PC-9 (cell line): ENCODE measurements at regions of chr14 and their contacts with region 1.

Region 1: GRCh38 chr14:21241218-21241819 is 27.9 kb downstream of the HNRNPC start:
- DNase-seq: no peak
- H3K4me3 ChIP-seq: no peak overlapping the region
- H3K27ac ChIP-seq: no peak overlapping the region
- H3K4me1 ChIP-seq: no peaks in the 10 kb centered on the region
- H3K27me3 ChIP-seq: no peaks in the 10 kb centered on the region
- CTCF ChIP-seq: peak; percentile 63

Region 2: GRCh38 chr14:20857630-20858261 is 383.6 kb before region 1 on chr14:
- CTCF ChIA-PET with region 1: no interaction called
- POLR2A ChIA-PET with region 1: no interaction called
- intact Hi-C with region 1: no loop called
- DNase-seq: peak in 1 of 2 experiments; percentile 48
- H3K4me3 ChIP-seq: no peak overlapping the region
- H3K27ac ChIP-seq: no peak overlapping the region
- H3K4me1 ChIP-seq: no peaks in the 10 kb centered on the region
- H3K27me3 ChIP-seq: peaks cover 6% of the 10 kb centered on the region; the same call in 1 of the 2 replicates
- CTCF ChIP-seq: peak; percentile 88

Region 3: DNA sequence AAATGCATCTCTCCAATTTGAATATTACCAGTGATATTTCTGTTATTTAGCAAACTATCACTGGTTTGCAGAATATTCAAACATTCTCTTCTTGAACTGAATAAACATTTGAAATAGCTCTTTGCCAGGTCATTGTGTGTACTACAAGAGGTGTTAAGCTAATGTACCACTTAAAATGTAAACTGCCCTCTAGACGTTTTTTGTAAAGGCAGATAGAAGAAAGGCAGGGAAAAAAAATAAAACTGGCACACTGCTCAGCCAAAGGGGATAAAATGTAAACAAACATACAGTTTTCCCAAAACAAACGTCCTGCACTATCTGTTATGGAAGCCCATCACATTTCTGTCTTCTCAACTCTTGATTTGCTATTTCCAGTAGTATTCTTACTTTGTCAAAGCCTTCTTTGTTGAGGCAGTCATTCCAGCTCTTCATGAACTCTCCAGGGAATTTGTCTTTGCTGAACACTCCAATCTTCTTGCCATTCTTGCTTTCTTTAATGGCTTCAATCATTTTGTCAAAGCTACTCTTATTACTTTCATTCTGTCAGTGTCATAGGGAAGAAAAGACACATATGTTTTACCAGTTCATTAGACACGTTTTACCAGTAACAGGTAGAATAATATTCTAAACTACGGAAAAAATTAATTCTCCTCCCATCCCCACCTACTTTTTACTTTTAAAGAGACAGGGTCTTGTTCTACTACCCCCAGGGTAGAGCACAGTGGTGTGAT is 128.8 kb after region 1 on chr14:
- CTCF ChIA-PET with region 1: no interaction called
- POLR2A ChIA-PET with region 1: no interaction called
- intact Hi-C with region 1: loop called (anchors 10 kb)
- DNase-seq: no peak
- H3K4me3 ChIP-seq: no peak overlapping the region
- H3K27ac ChIP-seq: no peak overlapping the region
- H3K4me1 ChIP-seq: no peaks in the 10 kb centered on the region
- H3K27me3 ChIP-seq: no peaks in the 10 kb centered on the region
- CTCF ChIP-seq: no peak

Region 4: DNA sequence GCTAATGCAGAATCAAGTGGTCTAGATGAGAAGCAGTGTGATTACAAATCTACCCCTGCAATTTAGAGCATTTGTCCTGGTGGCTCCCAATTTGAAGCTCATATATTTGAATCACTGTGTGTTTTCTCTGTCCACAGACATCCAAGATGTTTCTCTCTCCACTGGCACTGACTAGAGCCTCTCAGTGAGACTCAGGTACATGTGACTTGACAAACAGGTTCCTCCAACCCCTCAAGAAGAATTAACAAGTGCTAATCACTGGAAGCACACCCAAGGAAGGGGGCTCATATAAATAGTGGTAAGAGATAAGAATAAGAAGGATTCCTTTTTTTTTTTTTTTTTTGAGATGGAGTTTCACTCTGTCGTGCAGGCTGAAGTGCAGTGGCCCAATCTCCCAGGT is 372.9 kb after region 1 on chr14:
- CTCF ChIA-PET with region 1: no interaction called
- POLR2A ChIA-PET with region 1: no interaction called
- intact Hi-C with region 1: no loop called
- DNase-seq: no peak
- H3K4me3 ChIP-seq: no peak overlapping the region
- H3K27ac ChIP-seq: no peak overlapping the region
- H3K4me1 ChIP-seq: no peaks in the 10 kb centered on the region
- H3K27me3 ChIP-seq: no peaks in the 10 kb centered on the region
- CTCF ChIP-seq: no peak